K562 (cell line): ENCODE measurements at regions of chr4 and their contacts with region 1.

Region 1: DNA sequence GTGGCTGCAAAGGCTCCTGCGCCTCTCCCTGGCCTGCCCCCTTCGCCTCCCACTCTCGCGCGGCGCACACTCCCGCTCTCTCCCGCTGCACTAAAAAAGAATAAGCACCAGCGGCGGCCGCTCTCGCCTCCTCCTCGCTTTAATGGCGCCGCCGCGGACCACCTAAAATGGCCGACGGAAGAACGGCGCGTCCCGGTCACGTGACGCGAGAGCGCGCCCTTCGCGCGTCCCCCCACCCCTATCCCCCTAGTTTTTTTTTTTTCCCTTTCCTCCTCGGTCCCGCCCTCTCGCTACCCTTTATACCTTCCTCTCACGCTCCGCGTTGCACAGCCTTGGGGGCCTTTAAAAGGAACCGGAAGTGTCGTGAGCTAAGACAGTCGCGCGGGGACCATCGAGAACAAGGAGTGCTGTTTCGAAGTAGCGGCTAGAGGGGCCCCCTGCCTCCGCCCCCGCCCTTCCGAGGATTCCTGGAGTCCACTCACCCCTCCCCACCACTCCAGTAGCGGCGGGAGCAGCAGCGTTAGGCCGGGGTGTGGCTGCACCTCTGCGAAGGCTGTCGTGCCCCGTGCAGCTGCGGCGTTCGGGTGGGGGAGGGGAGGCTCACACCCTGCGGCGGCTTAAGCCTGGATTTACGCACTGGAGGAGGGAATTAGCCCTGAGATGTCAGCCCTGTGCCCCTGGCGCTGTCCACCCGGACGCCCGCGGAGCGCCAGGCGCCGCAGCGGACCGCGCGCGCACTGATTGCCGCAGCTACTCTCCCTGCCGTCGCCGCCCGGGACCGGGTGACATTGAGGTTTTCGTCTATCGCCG is at the start of gene HNRNPD:
- DNase-seq: peak; percentile 88 to 99 (median 92)
- ATAC-seq: peak; percentile 85
- H3K4me3 ChIP-seq: peak within 1 kb of the TSS; percentile 94
- H3K27ac ChIP-seq: peak within 1 kb of the TSS; percentile 100
- H3K4me1 ChIP-seq: peaks cover 8 to 9% of the 10 kb centered on the region in 2 experiments; a peak in 4 of 5 replicates
- H3K27me3 ChIP-seq: no peaks in the 10 kb centered on the region
- CTCF ChIP-seq: no peak
- EP300 ChIP-seq: no peak; the same call in 1 of the 2 replicates
- POLR2A ChIP-seq: peak; percentile 88
- RAD21 ChIP-seq: no peak; a peak in 1 of 4 replicates
- polyA plus RNA-seq, gene HNRNPD: 152 to 187 TPM

Region 2: GRCh38 chr4:82360298-82361177 is 13.5 kb before region 1 on chr4:
- CTCF ChIA-PET with region 1: interaction called, 5 read pairs
- POLR2A ChIA-PET with region 1: interaction called, 25 read pairs
- in situ Hi-C with region 1: no loop called
- intact Hi-C with region 1: no loop called
- DNase-seq: peak; percentile 21 to 39 (median 28)
- ATAC-seq: peak; percentile 73
- H3K4me3 ChIP-seq: no peak overlapping the region
- H3K27ac ChIP-seq: no peak overlapping the region
- H3K4me1 ChIP-seq: peaks cover 8 to 35% of the 10 kb centered on the region in 2 experiments; a peak in 3 of 5 replicates
- H3K27me3 ChIP-seq: no peaks in the 10 kb centered on the region
- CTCF ChIP-seq: peak in 2 of 3 experiments; percentile 66 to 67; a peak in 5 of 6 replicates
- EP300 ChIP-seq: no peak
- POLR2A ChIP-seq: no peak
- RAD21 ChIP-seq: peak; percentile 35 to 55

Region 3: DNA sequence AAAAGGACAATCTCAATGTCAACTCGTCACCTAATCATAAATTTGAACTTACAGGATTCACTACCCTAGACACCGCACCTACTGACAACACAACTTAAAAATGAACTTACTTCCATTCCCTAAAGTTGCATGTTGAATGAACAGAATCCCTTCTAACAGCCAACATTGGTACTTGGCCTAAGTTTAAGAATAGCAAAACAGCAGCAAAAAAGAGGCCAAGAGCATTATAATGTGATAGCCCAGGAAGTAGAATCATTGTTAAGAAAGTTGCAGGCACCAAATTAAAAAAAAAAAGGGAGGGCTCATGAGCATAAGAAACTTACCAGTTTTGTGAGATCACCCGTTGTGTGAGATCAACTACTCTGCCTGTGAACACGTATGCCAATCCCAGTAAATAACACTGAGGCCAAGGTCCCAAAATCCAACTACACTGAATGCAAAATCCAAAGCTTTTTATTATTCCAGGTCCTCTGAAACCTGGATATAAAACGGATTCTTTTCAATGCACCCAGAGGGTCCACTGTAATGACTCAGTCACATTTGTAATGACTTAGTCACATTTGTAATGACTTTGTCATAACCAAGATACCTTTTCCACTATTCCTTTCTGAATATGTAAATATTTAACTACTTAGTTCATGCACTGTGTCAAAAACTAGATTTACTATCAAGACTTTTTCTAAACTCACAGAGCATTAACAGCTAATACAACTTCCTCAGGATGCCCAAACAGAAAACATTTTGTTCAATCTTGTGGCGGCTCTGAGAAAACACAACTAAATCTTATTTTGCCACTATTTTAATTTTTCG is 49.4 kb after region 1 on chr4:
- CTCF ChIA-PET with region 1: no interaction called
- POLR2A ChIA-PET with region 1: interaction called, 19 read pairs
- in situ Hi-C with region 1: loop called (anchors 5 kb)
- intact Hi-C with region 1: no loop called
- DNase-seq: no peak
- ATAC-seq: peak; percentile 51
- H3K4me3 ChIP-seq: no peak overlapping the region
- H3K27ac ChIP-seq: no peak overlapping the region
- H3K4me1 ChIP-seq: peaks cover 2 to 9% of the 10 kb centered on the region in 2 experiments; a peak in 2 of 5 replicates
- H3K27me3 ChIP-seq: no peaks in the 10 kb centered on the region
- CTCF ChIP-seq: no peak
- EP300 ChIP-seq: no peak
- POLR2A ChIP-seq: peak; percentile 83
- RAD21 ChIP-seq: no peak